ENCODE measurements at regions of chr7 and their contacts with region 1.

Region 1: GRCh38 chr7:98168181-98168905 is 42.9 kb upstream of the BHLHA15 start:
- DNase-seq: peak; percentile 34
- H3K4me3 ChIP-seq: no peak overlapping the region
- H3K27ac ChIP-seq: no peak overlapping the region
- H3K27me3 ChIP-seq: no peaks in the 10 kb centered on the region
- CTCF ChIP-seq: peak; percentile 93

Region 2: DNA sequence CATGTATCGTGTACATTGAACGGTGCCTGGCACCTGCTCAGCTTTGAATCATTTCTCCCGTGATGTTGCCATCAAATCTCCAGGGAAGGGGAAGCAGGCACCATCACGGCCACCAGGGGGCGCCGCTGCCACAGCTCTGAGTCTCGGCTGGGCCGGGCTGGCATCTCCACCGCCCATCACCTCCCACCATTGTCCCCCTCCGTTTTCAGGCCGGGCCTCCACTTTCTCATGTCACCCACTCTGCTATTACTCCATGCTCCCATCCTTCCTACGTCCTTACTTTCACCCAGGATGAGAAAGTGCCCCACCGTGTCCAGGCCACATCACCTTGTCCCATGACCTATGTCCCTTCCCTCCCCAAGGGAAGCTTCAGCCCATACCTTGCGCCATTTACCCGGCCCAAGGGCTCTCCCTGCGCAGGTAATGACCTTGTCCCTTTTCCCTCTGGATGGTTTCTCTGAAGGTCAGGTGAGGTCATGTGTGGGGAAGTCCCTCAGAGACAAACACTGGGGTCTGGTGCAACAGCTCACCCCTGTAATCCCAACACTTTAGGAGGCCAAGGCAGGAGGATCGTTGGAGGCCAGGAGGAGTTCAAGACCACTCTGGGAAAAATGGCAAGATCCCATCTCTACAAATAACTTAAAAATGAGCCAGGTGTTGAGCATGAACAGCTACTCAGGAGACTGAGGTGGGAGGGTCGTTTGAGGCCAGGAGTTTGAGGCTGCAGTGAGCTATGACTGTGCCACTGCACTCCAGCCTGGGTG is 146.6 kb before region 1 on chr7:
- CTCF ChIA-PET with region 1: interaction called, 474 read pairs
- POLR2A ChIA-PET with region 1: interaction called, 6 read pairs
- DNase-seq: peak; percentile 18
- H3K4me3 ChIP-seq: no peak overlapping the region
- H3K27ac ChIP-seq: no peak overlapping the region
- H3K27me3 ChIP-seq: peaks cover 2% of the 10 kb centered on the region
- CTCF ChIP-seq: peak; percentile 90

Region 3: GRCh38 chr7:98106647-98107445 is 61.5 kb before region 1 on chr7 and contains the start of gene LMTK2:
- CTCF ChIA-PET with region 1: interaction called, 154 read pairs
- POLR2A ChIA-PET with region 1: interaction called, 5 read pairs
- DNase-seq: peak; percentile 78
- H3K4me3 ChIP-seq: peak within 1 kb of the TSS; percentile 80
- H3K27ac ChIP-seq: no peak within 1 kb of the TSS
- H3K27me3 ChIP-seq: no peaks in the 10 kb centered on the region
- CTCF ChIP-seq: peak; percentile 93
- polyA plus RNA-seq, gene LMTK2: 3.7 TPM in 2 replicates

Region 4: DNA sequence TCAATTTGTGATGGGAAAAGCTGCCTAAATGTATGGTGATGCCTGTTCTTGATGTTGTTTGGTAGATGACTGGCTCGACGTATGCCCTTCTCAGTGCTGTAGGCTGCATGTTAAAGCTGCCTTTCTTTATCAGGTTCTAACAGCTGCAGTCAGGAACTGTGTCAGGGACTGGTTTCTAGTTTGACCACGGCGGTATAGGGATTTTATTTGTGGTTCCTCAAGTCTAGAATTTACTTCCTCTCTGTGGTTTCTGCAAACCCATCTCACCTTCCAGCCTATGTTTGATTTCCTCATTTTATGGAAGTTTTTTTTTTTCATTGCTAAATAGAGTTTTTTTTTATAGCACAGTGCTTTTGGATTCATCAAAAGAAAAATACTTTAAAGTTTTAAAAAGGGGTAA is 35.2 kb before region 1 on chr7:
- CTCF ChIA-PET with region 1: interaction called, 50 read pairs
- POLR2A ChIA-PET with region 1: no interaction called
- DNase-seq: no peak
- H3K4me3 ChIP-seq: no peak overlapping the region
- H3K27ac ChIP-seq: no peak overlapping the region
- H3K27me3 ChIP-seq: no peaks in the 10 kb centered on the region
- CTCF ChIP-seq: no peak

Region 5: DNA sequence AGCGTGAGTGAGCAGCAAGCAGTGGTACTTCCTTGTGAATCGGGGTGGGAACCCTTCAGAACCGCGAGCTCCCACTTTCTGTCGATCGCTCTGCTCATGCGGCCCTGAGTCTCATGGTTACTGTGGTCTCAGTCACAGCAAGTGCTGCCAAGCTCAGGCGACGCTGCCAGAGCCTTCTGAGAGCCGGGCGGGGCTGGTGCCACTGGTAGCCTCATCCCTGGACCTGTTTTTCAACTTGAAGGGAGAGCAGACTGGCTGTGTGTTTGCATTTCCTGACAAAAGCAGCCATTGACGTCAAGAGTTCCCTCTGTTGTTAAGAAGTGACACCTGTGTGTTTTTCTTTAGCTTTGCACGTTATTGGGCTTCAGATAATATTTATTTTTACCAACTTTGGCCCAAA is 10.0 kb after region 1 on chr7:
- CTCF ChIA-PET with region 1: interaction called, 89 read pairs
- POLR2A ChIA-PET with region 1: no interaction called
- DNase-seq: no peak
- H3K4me3 ChIP-seq: no peak overlapping the region
- H3K27ac ChIP-seq: no peak overlapping the region
- H3K27me3 ChIP-seq: no peaks in the 10 kb centered on the region
- CTCF ChIP-seq: no peak

Region 6: GRCh38 chr7:98194672-98195457 is 26.5 kb after region 1 on chr7:
- CTCF ChIA-PET with region 1: interaction called, 14 read pairs
- POLR2A ChIA-PET with region 1: no interaction called
- DNase-seq: no peak
- H3K4me3 ChIP-seq: no peak overlapping the region
- H3K27ac ChIP-seq: no peak overlapping the region
- H3K27me3 ChIP-seq: no peaks in the 10 kb centered on the region
- CTCF ChIP-seq: no peak